ENCODE measurements at regions of chr2 and their contacts with region 1.

Region 1: GRCh38 chr2:28392297-28393113 is at the start of gene FOSL2:
- DNase-seq: peak; percentile 96 to 98
- H3K4me3 ChIP-seq: peak within 1 kb of the TSS; percentile 88
- H3K27ac ChIP-seq: peak within 1 kb of the TSS; percentile 96
- H3K4me1 ChIP-seq: peaks cover 36% of the 10 kb centered on the region
- H3K27me3 ChIP-seq: no peaks in the 10 kb centered on the region
- CTCF ChIP-seq: no peak
- total RNA-seq, gene FOSL2: 46.0 and 60.0 TPM in 2 replicates

Region 2: DNA sequence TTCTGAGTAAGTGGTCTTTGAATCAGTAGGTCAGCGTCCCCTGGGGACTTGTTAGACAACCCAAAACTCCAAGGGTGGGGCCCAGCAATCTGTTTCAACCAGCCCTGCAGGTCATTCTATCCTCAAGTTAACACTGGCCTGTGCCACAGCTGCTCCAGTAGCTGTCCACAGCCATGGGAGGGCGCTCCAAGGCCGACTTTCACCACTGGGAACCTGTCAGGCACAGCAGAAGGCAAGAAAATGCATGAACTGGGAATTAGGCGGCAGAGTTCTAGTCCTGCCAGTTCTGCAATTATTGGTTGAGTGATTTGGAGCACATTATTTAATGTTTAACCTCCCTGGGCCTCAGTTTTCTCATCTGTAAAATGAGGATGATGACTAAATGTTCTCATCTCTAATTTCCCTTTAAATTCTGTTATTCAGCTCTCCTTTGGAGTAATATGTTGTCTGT is 638.3 kb before region 1 on chr2:
- CTCF ChIA-PET with region 1: interaction called, 7 read pairs
- POLR2A ChIA-PET with region 1: interaction called, 3 read pairs
- intact Hi-C with region 1: loop called (anchors 1 kb)
- DNase-seq: peak; percentile 79 to 87
- H3K4me3 ChIP-seq: peak overlapping the region; percentile 43; the same call in 1 of the 2 replicates
- H3K27ac ChIP-seq: peak overlapping the region; percentile 96
- H3K4me1 ChIP-seq: peaks cover 39% of the 10 kb centered on the region
- H3K27me3 ChIP-seq: no peaks in the 10 kb centered on the region
- CTCF ChIP-seq: peak; percentile 96

Region 3: GRCh38 chr2:27954771-27955383 is 437.6 kb before region 1 on chr2:
- CTCF ChIA-PET with region 1: interaction called, 3 read pairs
- POLR2A ChIA-PET with region 1: no interaction called
- intact Hi-C with region 1: loop called (anchors 1 kb)
- DNase-seq: peak; percentile 48 to 96
- H3K4me3 ChIP-seq: no peak overlapping the region; the same call in 1 of the 2 replicates
- H3K27ac ChIP-seq: peak overlapping the region; percentile 88
- H3K4me1 ChIP-seq: peaks cover 61% of the 10 kb centered on the region
- H3K27me3 ChIP-seq: no peaks in the 10 kb centered on the region
- CTCF ChIP-seq: peak; percentile 38; the same call in 1 of the 2 replicates

Region 4: DNA sequence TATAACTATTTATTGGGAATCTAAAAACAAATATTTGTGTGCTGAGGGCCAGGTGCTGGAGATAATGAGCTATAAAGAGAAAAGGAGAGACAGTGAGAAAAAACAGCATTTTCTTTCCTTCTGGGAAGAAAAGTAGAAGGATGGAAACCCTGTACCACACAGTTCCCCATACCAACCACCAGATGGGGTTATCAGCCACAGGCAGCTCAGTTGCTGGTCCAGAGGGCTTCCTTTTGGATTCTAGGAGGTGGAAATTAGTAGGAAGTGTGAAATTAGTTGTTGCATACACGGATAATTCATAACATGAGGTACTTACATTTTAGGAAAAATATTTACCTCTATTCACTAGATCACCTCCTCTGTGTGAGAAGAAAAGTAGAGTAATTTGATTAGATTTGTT is 236.9 kb before region 1 on chr2:
- CTCF ChIA-PET with region 1: no interaction called
- POLR2A ChIA-PET with region 1: no interaction called
- intact Hi-C with region 1: loop called (anchors 5 kb)
- DNase-seq: no peak
- H3K4me3 ChIP-seq: no peak overlapping the region
- H3K27ac ChIP-seq: no peak overlapping the region
- H3K4me1 ChIP-seq: no peaks in the 10 kb centered on the region
- H3K27me3 ChIP-seq: no peaks in the 10 kb centered on the region
- CTCF ChIP-seq: peak; percentile 82

Region 5: DNA sequence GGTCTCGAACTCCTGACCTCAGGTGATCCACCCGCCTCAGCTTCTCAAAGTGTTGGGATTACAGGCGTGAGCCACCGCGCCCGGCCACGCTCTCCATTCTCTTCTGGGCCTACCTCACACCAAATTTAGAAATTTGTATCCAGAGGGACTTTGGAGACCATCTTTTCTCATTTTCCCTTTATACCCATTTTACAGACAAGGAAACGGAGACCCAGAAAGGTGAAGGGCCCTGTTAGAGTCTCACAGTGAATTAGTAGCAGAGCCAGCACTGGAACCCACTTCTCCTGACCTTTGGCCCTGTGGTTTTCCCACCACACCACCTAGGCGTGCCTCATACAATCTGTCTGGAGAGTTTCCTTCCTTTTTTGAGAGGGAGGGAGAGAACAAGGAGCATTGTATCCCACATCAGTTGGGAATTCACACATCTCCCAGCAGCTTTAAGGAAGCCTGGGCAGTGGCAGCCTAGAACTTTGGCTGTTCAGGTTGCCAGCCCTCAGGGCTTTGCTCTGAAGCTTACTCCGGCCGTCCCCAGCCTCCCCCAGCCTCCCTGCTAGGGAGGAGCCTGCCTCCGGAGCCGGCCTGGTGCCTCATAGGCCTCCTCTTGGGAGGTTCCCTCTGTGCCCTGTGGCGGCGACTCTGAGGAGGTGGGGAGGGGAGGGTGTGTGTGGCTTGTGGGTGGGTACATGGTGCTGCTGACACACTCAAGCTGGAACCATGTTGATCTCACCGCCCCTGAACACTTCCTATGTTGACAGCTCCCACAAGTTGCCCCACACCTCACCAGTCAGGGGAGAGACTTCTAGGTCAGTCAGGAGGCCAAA is 14.0 kb after region 1 on chr2:
- CTCF ChIA-PET with region 1: no interaction called
- POLR2A ChIA-PET with region 1: interaction called, 25 read pairs
- intact Hi-C with region 1: loop called (anchors 2 kb)
- DNase-seq: peak in 1 of 2 experiments; percentile 84
- H3K4me3 ChIP-seq: no peak overlapping the region
- H3K27ac ChIP-seq: peak overlapping the region; percentile 23; the same call in 1 of the 2 replicates
- H3K4me1 ChIP-seq: no peaks in the 10 kb centered on the region
- H3K27me3 ChIP-seq: no peaks in the 10 kb centered on the region
- CTCF ChIP-seq: no peak

Region 6: GRCh38 chr2:28544919-28545589 is 152.5 kb after region 1 on chr2:
- CTCF ChIA-PET with region 1: no interaction called
- POLR2A ChIA-PET with region 1: no interaction called
- intact Hi-C with region 1: loop called (anchors 10 kb)
- DNase-seq: peak; percentile 48 to 82
- H3K4me3 ChIP-seq: peak overlapping the region; percentile 25; the same call in 1 of the 2 replicates
- H3K27ac ChIP-seq: peak overlapping the region; percentile 82
- H3K4me1 ChIP-seq: peaks cover 40% of the 10 kb centered on the region
- H3K27me3 ChIP-seq: no peaks in the 10 kb centered on the region
- CTCF ChIP-seq: no peak